Activated CD4-positive, alpha-beta T cell treated with anti-CD3 and anti-CD28 coated beads, Interleukin-2, amount 10 ng/mL, durations not matched to agents 24 days and 14 days (primary cell): ENCODE measurements at regions of chr1 and their contacts with region 1.

Region 1: GRCh38 chr1:84996846-84997666 is at the start of gene MCOLN2:
- DNase-seq: peak; percentile 88
- H3K4me3 Mint-ChIP-seq: peak within 1 kb of the TSS; percentile 85
- H3K27ac Mint-ChIP-seq: peak within 1 kb of the TSS; percentile 89
- H3K4me1 Mint-ChIP-seq: peaks cover 47% of the 10 kb centered on the region
- H3K27me3 Mint-ChIP-seq: peaks cover 36% of the 10 kb centered on the region
- total RNA-seq, gene MCOLN2: 92.3 and 95.6 TPM in 2 replicates

Region 2: DNA sequence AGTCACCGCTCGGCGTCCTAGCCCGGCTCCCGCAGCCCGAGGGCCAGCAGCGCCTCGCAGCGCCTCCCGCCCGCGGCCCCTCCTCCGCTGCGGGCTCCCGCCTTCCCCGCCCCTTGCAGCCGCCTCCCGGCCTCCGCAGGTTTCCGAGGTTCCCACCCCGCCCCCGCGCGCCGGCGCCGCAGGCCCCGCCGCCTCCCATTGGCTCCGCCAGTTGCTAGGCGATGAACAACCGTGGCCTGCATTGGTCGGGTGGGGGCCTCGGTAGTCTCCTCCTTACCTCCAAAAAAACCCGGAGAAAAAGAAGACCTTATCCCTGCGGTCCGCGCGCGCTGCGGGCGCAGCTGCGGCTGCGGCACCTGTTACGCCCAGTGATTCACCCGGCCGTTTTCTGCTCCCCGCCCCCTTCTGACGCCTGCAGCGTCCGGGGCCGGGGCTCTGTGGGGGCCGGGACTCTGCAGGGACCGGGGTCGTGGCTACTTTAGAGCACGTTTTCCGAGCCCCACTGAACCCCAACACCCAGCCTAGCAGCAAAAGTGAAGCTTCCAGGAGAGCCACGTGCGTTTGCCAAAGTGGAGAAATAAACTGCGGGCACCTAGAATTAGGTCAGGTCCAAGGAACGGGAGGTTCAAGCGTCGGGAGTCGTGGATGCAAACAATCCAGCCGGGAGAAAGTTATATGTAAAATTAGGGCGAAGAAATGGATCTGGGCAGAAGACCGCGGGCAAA is 306.5 kb before region 1 on chr1 and contains the start of gene SSX2IP:
- intact Hi-C with region 1: loop called (anchors 5 kb)
- DNase-seq: peak; percentile 100
- H3K4me3 Mint-ChIP-seq: peak within 1 kb of the TSS; percentile 98
- H3K27ac Mint-ChIP-seq: peak within 1 kb of the TSS; percentile 95
- H3K4me1 Mint-ChIP-seq: peaks cover 43% of the 10 kb centered on the region
- H3K27me3 Mint-ChIP-seq: peaks cover 4% of the 10 kb centered on the region
- total RNA-seq, gene SSX2IP: 10.0 and 11.8 TPM in 2 replicates

Region 3: DNA sequence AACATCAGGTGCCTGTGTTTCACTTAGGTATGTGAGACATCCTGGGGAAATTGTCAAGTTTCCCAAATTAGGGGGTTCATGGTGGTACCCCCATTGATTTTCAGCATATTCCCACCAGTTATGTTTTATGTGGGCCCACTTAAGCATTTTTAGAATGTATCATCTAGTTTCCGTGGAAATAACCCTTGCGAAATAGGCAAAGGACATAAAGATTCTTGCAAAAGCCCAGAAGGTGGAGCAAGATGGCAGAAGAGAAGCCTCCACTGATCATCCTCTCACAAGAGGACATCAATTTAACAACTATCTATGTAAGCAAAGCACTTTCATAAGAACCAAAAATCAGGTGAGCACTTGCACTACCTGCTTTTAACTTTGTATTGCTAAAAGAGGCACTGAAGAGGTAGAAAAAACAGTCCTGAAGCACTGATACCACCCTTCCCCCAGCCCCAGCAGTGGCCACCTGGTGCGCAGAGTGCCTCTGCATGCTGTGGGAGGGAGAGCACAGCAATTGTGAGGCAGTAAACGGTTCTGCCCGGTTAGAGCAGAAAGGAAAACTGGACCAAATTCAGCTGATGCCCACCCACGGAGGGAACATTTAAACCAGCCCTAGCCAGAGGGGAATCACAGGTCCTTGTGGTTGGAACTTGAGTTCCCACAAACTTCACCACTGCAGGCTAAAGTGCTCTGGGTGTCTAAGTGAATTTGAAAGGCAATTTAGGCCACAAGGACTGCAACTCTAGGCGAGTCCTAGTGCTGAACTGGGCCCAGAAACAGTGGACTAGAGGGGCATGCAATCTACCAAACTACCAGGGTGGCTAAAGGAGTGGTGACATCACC is 23.3 kb before region 1 on chr1:
- intact Hi-C with region 1: loop called (anchors 1 kb)
- DNase-seq: peak; percentile 65
- H3K4me3 Mint-ChIP-seq: peak overlapping the region; percentile 61
- H3K27ac Mint-ChIP-seq: peak overlapping the region; percentile 83
- H3K4me1 Mint-ChIP-seq: peaks cover 65% of the 10 kb centered on the region
- H3K27me3 Mint-ChIP-seq: no peaks in the 10 kb centered on the region

Region 4: DNA sequence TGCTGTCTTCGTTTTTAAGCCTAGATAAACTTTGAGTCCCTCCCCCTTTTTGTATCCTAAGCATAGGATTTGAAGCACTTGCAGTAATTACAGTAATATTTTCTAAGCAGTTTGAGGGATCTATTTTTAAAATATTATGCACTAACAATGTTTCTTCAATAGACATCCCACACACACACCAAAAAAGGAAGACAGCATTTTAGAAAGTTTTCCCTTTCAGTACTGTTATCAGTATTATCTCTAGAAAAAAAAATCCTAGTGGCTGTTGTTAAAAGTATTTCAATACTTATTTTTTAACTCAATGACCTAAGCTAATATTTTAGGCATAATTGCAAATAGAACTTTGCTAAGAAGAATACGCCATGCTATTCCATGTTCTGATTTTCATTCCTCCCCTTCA is 36.2 kb after region 1 on chr1:
- intact Hi-C with region 1: no loop called
- DNase-seq: no peak
- H3K4me3 Mint-ChIP-seq: no peak overlapping the region
- H3K27ac Mint-ChIP-seq: no peak overlapping the region
- H3K4me1 Mint-ChIP-seq: peaks cover 2% of the 10 kb centered on the region
- H3K27me3 Mint-ChIP-seq: peaks cover 22% of the 10 kb centered on the region

Region 5: DNA sequence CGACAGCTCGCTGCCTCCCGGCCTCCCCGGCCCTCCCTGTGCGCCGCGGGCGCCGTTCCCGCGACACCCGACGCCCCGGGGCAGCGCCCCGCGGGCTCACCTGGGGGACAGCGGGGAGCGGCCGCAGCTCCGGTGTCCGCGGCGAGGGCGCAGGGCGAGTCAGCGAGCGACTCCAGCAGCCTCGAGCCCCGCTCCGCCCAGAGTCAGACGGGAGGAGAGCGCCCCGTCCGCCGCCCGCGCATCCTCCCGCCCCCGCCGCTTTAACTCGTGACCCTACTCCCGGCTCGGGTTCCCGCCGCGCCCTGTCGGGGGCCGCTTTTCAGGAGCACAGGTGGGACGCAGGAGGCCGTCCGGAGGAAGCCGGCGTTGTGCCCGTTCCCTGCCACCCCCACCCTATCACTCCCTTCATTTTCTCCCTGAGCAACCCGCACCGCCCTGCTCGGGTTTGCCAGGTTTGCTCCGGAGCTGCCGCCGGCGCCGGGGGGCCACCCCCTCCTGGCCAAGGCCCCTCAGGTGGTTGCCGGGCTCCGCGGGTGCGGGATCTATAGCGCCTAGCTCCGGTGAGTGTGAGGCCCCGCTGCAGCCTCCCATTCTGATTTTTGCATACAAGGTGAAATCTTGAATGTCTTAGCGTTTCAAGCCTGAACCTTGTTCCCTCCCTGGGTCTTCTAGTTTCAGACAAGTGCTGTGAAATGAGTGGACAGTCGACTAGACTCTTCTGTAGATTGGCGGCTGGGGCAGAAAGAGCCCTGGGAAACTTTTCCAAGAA is 51.4 kb after region 1 on chr1 and contains the start of gene MCOLN3:
- intact Hi-C with region 1: loop called (anchors 2 kb)
- DNase-seq: peak; percentile 83
- H3K4me3 Mint-ChIP-seq: peak within 1 kb of the TSS; percentile 70
- H3K27ac Mint-ChIP-seq: peak within 1 kb of the TSS; percentile 21
- H3K4me1 Mint-ChIP-seq: peaks cover 26% of the 10 kb centered on the region
- H3K27me3 Mint-ChIP-seq: peaks cover 44% of the 10 kb centered on the region
- total RNA-seq, gene MCOLN3: 0.51 and 0.66 TPM in 2 replicates

Region 6: GRCh38 chr1:85259118-85259911 is 262.3 kb after region 1 on chr1 and contains the start of gene C1orf52:
- intact Hi-C with region 1: loop called (anchors 5 kb)
- DNase-seq: peak; percentile 99
- H3K4me3 Mint-ChIP-seq: peak within 1 kb of the TSS; percentile 96
- H3K27ac Mint-ChIP-seq: peak within 1 kb of the TSS; percentile 93
- H3K4me1 Mint-ChIP-seq: peaks cover 24% of the 10 kb centered on the region
- H3K27me3 Mint-ChIP-seq: no peaks in the 10 kb centered on the region
- total RNA-seq, gene C1orf52: 29.8 and 32.3 TPM in 2 replicates